Endothelial cell of umbilical vein (primary cell): ENCODE measurements at regions of chr17 and their contacts with region 1.

Region 1: DNA sequence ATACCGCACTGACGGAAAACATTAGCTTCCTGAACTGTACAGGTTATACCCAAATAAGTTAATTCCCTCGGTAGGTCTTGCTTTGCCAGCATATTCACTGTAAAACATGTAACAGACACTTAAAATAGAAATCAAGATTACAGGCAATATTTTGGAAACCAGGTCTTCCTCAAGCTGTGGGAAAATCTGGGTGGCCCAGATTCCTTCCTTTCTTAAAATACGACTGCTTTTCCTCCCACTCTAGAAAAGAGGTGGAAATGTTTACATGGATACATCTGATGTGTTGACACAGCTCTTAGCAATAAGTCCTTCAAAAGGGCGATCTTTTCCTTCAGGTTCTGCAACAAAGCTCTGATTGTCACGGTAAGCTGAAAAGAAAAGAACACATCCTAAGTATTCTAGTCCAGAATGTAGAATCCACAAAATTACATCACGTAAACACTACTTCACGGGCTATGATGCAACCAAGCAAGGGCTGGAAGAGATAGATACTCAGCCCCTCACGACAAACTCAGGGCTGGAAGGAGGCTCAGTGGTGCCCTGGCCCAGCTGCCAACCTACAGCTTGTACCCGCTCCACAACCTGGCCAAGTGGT is 18.4 kb downstream of the STX8 start:
- DNase-seq: no peak
- H3K4me3 ChIP-seq: no peak overlapping the region
- H3K27ac ChIP-seq: no peak overlapping the region
- H3K4me1 ChIP-seq: no peaks in the 10 kb centered on the region
- H3K27me3 ChIP-seq: no peaks in the 10 kb centered on the region
- CTCF ChIP-seq: no peak
- POLR2A ChIP-seq: no peak

Region 2: DNA sequence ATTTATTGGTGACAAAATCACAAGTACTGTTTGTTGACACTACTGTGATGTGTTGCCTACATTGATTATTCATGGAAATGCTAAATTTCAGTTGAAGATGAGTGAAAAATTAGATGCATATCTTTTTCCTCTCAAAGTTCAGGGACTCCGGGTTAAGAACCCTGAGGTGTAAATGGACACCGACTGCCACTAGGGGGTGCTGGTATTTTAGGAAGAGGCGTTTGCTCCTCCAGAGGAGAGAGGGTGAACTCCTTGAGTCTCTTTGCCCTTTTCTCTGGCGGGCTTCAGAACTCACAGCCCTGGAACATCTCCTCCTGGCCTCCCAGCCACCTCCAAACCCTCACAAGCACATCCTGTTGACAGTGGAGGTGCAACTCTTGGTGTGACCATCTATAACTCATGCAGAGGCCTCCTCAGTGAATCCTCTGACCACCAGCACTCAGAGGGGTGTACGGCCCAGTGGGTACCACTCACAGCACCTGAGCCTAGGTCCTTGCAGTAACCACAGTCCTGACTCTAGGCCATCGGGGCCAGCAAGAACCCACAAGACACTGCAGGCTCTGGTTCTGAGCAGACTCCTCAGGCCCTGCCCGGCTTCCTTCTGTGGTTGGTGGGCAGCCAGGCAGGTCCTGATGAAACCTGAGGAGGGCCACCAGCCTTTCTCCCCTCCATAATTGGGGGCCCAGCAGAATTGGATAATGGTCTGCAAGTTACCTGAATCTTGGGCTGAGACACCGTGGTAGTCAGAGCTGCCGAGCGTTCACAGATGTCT is 565.6 kb before region 1 on chr17:
- CTCF ChIA-PET with region 1: interaction called, 24 read pairs
- POLR2A ChIA-PET with region 1: no interaction called
- dilution Hi-C with region 1: no loop called
- intact Hi-C with region 1: loop called (anchors 10 kb)
- DNase-seq: peak; percentile 33
- H3K4me3 ChIP-seq: no peak overlapping the region
- H3K27ac ChIP-seq: no peak overlapping the region
- H3K4me1 ChIP-seq: no peaks in the 10 kb centered on the region
- H3K27me3 ChIP-seq: no peaks in the 10 kb centered on the region
- CTCF ChIP-seq: peak; percentile 65 to 71
- POLR2A ChIP-seq: no peak

Region 3: DNA sequence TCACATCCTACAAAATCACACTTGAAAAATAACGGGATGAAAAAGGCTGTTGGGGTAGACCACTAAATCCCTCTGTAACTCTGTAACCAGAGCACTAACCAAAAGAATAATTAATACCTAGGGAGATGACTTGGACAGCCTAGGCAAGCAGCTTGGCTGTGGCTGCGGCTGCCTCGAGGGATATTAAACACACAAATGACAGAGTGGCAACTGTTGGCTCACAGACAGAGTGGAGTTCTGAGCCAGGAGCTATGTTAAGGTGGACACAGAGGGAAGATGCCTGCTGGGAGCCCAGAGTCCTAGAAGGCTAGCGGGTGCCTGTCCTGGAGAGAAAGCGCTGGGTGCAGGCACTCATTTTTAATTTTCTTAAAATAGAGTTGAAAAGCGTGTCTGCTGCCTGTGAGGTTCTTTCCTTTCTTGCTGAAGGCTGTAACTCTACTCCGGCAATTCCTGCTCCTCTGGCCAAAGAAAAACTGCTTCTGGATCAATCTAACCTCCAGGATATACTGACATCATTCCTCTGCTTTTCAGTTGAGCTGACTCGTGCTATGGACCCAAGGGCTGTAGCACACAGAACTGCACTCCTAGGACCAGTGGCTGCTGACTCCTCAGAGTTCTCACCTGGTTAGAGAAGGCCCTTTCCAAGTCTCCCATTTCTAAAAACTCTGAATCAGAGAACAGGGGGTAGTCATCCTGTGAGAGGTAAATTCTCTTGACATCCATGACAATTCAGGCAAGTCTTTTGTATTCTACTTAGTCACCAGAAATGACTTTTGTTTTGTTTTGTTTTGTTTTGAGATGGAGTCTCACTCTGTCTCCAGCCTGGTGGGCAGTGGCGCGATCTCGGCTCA is 129.6 kb before region 1 on chr17:
- CTCF ChIA-PET with region 1: no interaction called
- POLR2A ChIA-PET with region 1: no interaction called
- dilution Hi-C with region 1: no loop called
- intact Hi-C with region 1: no loop called
- DNase-seq: no peak
- H3K4me3 ChIP-seq: no peak overlapping the region
- H3K27ac ChIP-seq: no peak overlapping the region
- H3K4me1 ChIP-seq: no peaks in the 10 kb centered on the region
- H3K27me3 ChIP-seq: no peaks in the 10 kb centered on the region
- CTCF ChIP-seq: no peak
- POLR2A ChIP-seq: no peak

Region 4: DNA sequence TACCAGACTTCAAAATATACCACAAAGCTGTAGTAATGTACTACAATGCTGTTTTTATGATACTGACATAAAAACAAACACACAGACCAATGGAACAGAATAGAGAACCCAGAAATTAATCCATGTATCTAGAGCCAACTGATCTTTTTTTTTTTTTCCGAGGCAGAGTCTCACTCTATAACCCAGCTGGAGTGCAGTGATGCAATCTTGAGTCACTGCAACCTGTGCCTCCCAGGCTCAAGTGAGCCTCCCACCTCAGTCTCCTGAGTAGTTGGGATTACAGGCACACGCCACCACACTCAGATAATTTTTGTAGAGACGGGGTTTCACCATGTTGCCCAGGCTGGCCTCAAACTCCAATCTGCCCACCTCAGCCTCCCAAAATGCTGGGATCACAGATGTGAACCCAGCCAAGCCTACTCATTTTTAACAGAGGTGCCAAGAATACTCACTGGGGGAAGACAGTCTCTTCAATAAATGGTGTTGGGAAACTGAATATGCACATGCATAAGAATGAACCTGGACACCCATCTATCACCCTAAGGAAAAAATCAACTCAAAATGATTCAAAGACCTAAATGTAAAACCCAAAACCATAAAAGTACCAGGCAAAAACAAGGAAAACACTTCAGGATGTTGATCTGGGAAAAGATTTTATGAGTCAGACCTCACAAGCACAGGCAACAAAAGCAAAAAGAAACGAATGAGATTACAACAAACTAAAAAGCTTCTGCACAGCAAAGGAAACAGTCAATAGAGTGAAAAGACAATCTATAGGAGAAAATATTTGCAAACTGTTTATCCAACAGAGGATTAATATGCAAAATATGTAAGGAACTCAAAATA is 44.7 kb before region 1 on chr17:
- CTCF ChIA-PET with region 1: no interaction called
- POLR2A ChIA-PET with region 1: no interaction called
- dilution Hi-C with region 1: no loop called
- intact Hi-C with region 1: no loop called
- DNase-seq: peak; percentile 56
- H3K4me3 ChIP-seq: peak overlapping the region in 1 of 3 experiments; percentile 23
- H3K27ac ChIP-seq: peak overlapping the region; percentile 73
- H3K4me1 ChIP-seq: peaks cover 16% of the 10 kb centered on the region
- H3K27me3 ChIP-seq: no peaks in the 10 kb centered on the region
- CTCF ChIP-seq: no peak
- POLR2A ChIP-seq: no peak

Region 5: GRCh38 chr17:9544221-9544620 is 13.0 kb before region 1 on chr17:
- CTCF ChIA-PET with region 1: interaction called, 10 read pairs
- POLR2A ChIA-PET with region 1: no interaction called
- dilution Hi-C with region 1: no loop called
- intact Hi-C with region 1: no loop called
- DNase-seq: no peak
- H3K4me3 ChIP-seq: no peak overlapping the region
- H3K27ac ChIP-seq: no peak overlapping the region
- H3K4me1 ChIP-seq: no peaks in the 10 kb centered on the region
- H3K27me3 ChIP-seq: no peaks in the 10 kb centered on the region
- CTCF ChIP-seq: no peak
- POLR2A ChIP-seq: no peak

Region 6: GRCh38 chr17:9575381-9576101 is 18.3 kb after region 1 on chr17 and contains the start of gene STX8:
- CTCF ChIA-PET with region 1: interaction called, 31 read pairs
- POLR2A ChIA-PET with region 1: no interaction called
- dilution Hi-C with region 1: no loop called
- intact Hi-C with region 1: no loop called
- DNase-seq: peak; percentile 90
- H3K4me3 ChIP-seq: peak within 1 kb of the TSS; percentile 59 to 89 (median 76)
- H3K27ac ChIP-seq: peak within 1 kb of the TSS; percentile 8
- H3K4me1 ChIP-seq: peaks cover 19% of the 10 kb centered on the region
- H3K27me3 ChIP-seq: no peaks in the 10 kb centered on the region
- CTCF ChIP-seq: no peak
- POLR2A ChIP-seq: no peak
- total RNA-seq, gene STX8: 67.3 and 68.0 TPM in 2 replicates